Ovary (tissue), 10 donors: ENCODE measurements at regions of chr21 and their contacts with region 1.

Region 1: DNA sequence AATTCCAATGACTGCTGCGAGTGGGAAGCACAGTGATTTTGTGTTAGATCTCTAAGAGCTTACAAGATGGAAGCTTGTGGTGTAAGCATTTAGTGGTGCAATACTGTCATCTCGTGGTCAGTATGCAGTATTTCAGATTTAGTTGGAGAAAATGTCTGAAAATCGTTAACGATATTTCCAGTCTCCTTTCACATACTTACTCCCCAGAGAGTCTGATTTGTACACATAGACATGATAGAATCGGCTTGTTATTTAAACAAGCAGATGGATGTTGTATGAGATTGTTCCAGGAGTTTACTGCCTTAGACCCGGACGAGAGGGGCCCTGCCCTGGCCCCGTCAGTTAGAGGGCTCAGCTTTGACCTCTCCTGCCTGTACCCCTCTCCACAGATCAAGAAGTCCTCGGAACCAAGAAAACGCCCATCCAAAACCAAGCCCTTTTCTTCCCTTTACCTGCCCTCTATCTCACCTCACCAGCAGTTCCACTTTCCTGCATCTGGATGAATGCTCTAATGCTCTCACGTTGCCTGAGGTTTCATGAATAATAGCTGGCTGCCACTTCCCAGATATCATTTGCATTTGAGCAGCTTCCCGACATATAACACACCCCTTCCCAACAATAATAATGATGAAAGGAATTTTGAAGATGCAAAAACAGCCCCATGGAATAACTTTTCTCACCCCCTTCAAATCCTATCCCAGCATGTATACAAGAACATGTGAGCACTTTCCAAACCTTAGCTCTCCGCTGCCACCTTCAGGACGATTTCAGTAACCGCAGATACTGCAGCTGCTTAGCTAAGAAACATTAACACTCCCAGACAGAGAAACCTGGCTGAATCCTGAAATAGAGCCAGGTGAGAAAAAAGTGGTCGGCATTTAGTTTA is 247.3 kb downstream of the LTN1 start:
- DNase-seq: peak; percentile 64 to 80 (median 73)
- H3K4me3 ChIP-seq: peak overlapping the region; percentile 27
- H3K27ac ChIP-seq: peak overlapping the region in 1 of 2 donors; percentile 51
- H3K4me1 ChIP-seq: peaks cover 2% of the 10 kb centered on the region
- H3K27me3 ChIP-seq: no peaks in the 10 kb centered on the region
- CTCF ChIP-seq: peak; percentile 95 to 97 (median 95)
- EP300 ChIP-seq: no peak
- POLR2A ChIP-seq: no peak

Region 2: GRCh38 chr21:28063241-28064216 is 681.8 kb before region 1 on chr21:
- intact Hi-C with region 1: loop called in 1 of 4 experiments (anchors 10 kb)
- DNase-seq: no peak
- H3K4me3 ChIP-seq: no peak overlapping the region
- H3K27ac ChIP-seq: no peak overlapping the region
- H3K4me1 ChIP-seq: peaks cover 4% of the 10 kb centered on the region
- H3K27me3 ChIP-seq: no peaks in the 10 kb centered on the region
- CTCF ChIP-seq: no peak
- EP300 ChIP-seq: no peak
- POLR2A ChIP-seq: no peak

Region 3: GRCh38 chr21:28856588-28857250 is 111.3 kb after region 1 on chr21:
- intact Hi-C with region 1: no loop called
- DNase-seq: no peak
- H3K4me3 ChIP-seq: no peak overlapping the region
- H3K27ac ChIP-seq: no peak overlapping the region
- H3K4me1 ChIP-seq: peaks cover 3% of the 10 kb centered on the region
- H3K27me3 ChIP-seq: no peaks in the 10 kb centered on the region
- CTCF ChIP-seq: no peak
- EP300 ChIP-seq: no peak
- POLR2A ChIP-seq: no peak